GM18951 (cell line): ENCODE measurements at regions of chr1 and their contacts with region 1.

Region 1: GRCh38 chr1:93615582-93616150 is 66.0 kb downstream of the BCAR3 start:
- POLR2A ChIP-seq: no peak

Region 2: GRCh38 chr1:93304716-93305138 is 310.9 kb before region 1 on chr1:
- in situ Hi-C with region 1: loop called (anchors 25 kb)
- POLR2A ChIP-seq: no peak